ENCODE measurements at regions of chr1 and their contacts with region 1.

Region 1: GRCh38 chr1:211698161-211699026 is 23.0 kb upstream of the NEK2 start:
- DNase-seq: peak; percentile 92
- ATAC-seq: peak; percentile 98
- H3K4me3 Mint-ChIP-seq: no peak overlapping the region
- H3K27ac Mint-ChIP-seq: no peak overlapping the region
- H3K4me1 Mint-ChIP-seq: peaks cover 9% of the 10 kb centered on the region
- H3K27me3 Mint-ChIP-seq: no peaks in the 10 kb centered on the region

Region 2: GRCh38 chr1:211680752-211681327 is 17.6 kb before region 1 on chr1:
- CTCF ChIA-PET with region 1: interaction called, 102 read pairs
- POLR2A ChIA-PET with region 1: no interaction called
- intact Hi-C with region 1: no loop called
- DNase-seq: peak; percentile 85
- ATAC-seq: peak; percentile 94
- H3K4me3 Mint-ChIP-seq: no peak overlapping the region
- H3K27ac Mint-ChIP-seq: peak overlapping the region; percentile 71
- H3K4me1 Mint-ChIP-seq: peaks cover 7% of the 10 kb centered on the region
- H3K27me3 Mint-ChIP-seq: no peaks in the 10 kb centered on the region

Region 3: DNA sequence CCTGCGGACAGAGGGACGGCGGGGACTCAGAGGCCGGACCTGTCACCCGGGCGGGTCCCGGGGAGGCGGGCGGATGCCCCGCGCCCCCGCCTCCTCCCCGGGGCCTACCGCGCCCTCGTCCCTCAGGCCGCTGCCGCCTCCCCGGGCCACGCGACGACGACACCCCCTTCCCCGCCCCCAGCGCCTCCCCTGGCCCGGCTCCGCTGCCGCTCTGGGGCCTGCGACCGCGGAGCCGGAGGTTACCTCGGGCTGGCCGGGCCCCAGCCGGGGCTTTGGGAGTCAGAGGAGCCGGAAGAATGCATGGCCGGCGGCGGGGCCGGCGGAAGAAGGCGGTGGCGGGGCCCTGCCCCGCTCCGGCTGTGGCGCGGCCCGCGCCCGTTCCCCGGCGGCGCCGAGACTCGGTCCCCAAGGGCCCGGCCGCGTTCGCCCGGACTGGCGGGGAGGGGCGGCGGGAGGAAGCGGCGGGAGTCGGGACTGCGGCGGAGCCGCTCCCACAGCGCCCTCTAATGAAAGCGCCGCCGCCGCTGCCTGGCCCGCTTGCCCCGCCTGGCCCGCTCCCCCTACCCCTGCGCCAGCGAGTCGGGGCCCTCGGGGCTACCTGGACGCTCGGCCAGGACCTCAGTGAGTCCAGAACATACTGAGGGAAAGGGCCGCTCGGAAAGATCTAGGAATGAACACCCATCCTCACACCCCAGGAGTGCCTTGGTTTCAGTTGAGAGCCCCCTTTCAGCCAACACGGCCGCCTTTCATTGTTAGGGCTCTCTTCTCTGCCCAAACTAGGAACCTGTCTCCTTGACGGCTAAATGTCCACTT is 132.1 kb after region 1 on chr1 and contains the start of gene LPGAT1:
- CTCF ChIA-PET with region 1: interaction called, 11 read pairs
- POLR2A ChIA-PET with region 1: no interaction called
- intact Hi-C with region 1: loop called (anchors 1 to 5 kb)
- DNase-seq: peak; percentile 86
- ATAC-seq: peak; percentile 83
- H3K4me3 Mint-ChIP-seq: peak within 1 kb of the TSS; percentile 82
- H3K27ac Mint-ChIP-seq: peak within 1 kb of the TSS; percentile 85
- H3K4me1 Mint-ChIP-seq: peaks cover 57% of the 10 kb centered on the region
- H3K27me3 Mint-ChIP-seq: no peaks in the 10 kb centered on the region
- total RNA-seq, gene LPGAT1: 21.7 to 24.9 TPM

Region 4: GRCh38 chr1:212012034-212012740 is 313.8 kb after region 1 on chr1:
- CTCF ChIA-PET with region 1: interaction called, 5 read pairs
- POLR2A ChIA-PET with region 1: no interaction called
- intact Hi-C with region 1: loop called in 1 of 2 experiments (anchors 5 kb)
- DNase-seq: peak; percentile 80
- ATAC-seq: peak; percentile 99
- H3K4me3 Mint-ChIP-seq: no peak overlapping the region
- H3K27ac Mint-ChIP-seq: no peak overlapping the region
- H3K4me1 Mint-ChIP-seq: no peaks in the 10 kb centered on the region
- H3K27me3 Mint-ChIP-seq: no peaks in the 10 kb centered on the region